SK-N-SH (cell line): ENCODE measurements at regions of chr17 and their contacts with region 1.

Region 1: DNA sequence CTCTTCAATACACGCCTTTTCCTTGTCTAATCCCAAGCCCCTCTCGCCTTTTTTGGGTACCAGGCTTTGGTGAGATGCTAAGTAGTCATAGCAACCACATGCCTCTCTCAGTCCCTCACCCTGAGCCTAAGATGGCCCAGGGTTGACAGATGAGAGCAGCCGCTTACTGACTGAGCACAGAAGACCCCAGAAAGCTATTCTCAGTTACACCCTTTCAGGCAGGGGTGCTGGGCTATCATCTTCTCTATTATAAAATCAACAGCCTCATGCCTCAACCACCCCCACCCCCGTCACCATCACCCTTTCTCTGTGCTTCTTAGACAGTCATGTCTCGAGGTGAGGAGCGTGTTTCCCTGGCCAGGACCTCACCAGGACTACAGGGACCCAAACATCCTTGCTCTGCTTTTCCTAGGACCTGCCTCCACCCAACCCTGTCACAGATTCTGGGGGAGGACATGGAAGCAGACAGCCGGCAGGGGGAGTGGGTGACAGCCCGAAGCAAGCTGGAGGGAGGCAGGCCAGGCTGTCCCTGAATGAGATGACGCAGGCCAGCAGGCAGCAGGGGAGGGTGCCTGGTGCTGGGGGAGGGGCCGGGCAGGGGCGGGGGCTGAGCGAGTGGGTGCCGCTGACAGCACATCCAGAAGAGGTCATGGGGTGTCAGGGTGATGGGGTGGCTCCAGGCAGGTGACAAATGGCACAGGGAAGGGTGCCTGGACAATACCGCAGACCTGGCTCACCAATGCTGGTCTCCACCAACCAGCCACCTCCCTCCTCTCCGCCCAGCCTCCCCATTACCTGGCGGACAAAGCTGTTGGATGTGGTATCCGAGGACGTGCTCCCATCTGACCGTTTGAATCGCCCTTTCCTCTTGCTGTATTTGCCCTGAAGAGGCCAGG is 3.1 kb downstream of the CACNB1 start:
- DNase-seq: peak; percentile 90
- H3K4me3 ChIP-seq: no peak overlapping the region
- H3K27ac ChIP-seq: no peak overlapping the region; a peak in 1 of 4 replicates
- H3K4me1 ChIP-seq: peaks cover 19 to 34% of the 10 kb centered on the region in 2 experiments; a peak in 2 of 4 replicates
- H3K27me3 ChIP-seq: no peaks in the 10 kb centered on the region
- CTCF ChIP-seq: peak; percentile 35; the same call in 1 of the 2 replicates
- EP300 ChIP-seq: no peak
- RAD21 ChIP-seq: peak; percentile 43

Region 2: DNA sequence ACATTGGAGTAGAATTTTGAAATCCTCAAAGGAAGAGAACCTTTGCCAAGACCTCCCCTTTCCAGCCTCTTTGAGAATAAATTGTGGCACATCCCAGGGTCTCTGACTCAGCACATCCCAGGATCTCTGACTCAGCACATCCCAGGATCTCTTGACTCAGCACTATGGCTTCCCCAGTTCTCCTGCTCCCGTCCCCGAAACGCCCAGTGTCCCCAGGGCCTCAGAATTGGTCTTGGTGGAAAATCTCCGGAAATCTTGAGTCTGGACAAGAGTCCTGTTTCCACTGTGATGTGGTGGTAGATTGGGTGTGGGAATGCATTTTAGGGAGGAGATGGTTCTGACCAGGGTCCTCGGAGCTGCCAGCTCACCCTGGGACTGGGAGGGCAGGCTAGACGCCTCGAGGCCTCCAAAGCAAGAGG is 62.1 kb before region 1 on chr17:
- CTCF ChIA-PET with region 1: no interaction called
- POLR2A ChIA-PET with region 1: no interaction called
- DNase-seq: no peak
- H3K4me3 ChIP-seq: no peak overlapping the region
- H3K27ac ChIP-seq: no peak overlapping the region
- H3K4me1 ChIP-seq: no peaks in the 10 kb centered on the region
- H3K27me3 ChIP-seq: no peaks in the 10 kb centered on the region
- CTCF ChIP-seq: no peak
- EP300 ChIP-seq: no peak
- RAD21 ChIP-seq: no peak

Region 3: GRCh38 chr17:39164675-39165143 is 29.6 kb before region 1 on chr17:
- CTCF ChIA-PET with region 1: interaction called, 96 read pairs
- POLR2A ChIA-PET with region 1: interaction called, 7 read pairs
- DNase-seq: peak; percentile 98
- H3K4me3 ChIP-seq: peak overlapping the region; percentile 50 to 62
- H3K27ac ChIP-seq: no peak overlapping the region
- H3K4me1 ChIP-seq: peaks cover 0 to 3% of the 10 kb centered on the region in 2 experiments; a peak in 2 of 4 replicates
- H3K27me3 ChIP-seq: no peaks in the 10 kb centered on the region
- CTCF ChIP-seq: peak; percentile 78
- EP300 ChIP-seq: no peak
- RAD21 ChIP-seq: peak; percentile 35; the same call in 1 of the 2 replicates

Region 4: DNA sequence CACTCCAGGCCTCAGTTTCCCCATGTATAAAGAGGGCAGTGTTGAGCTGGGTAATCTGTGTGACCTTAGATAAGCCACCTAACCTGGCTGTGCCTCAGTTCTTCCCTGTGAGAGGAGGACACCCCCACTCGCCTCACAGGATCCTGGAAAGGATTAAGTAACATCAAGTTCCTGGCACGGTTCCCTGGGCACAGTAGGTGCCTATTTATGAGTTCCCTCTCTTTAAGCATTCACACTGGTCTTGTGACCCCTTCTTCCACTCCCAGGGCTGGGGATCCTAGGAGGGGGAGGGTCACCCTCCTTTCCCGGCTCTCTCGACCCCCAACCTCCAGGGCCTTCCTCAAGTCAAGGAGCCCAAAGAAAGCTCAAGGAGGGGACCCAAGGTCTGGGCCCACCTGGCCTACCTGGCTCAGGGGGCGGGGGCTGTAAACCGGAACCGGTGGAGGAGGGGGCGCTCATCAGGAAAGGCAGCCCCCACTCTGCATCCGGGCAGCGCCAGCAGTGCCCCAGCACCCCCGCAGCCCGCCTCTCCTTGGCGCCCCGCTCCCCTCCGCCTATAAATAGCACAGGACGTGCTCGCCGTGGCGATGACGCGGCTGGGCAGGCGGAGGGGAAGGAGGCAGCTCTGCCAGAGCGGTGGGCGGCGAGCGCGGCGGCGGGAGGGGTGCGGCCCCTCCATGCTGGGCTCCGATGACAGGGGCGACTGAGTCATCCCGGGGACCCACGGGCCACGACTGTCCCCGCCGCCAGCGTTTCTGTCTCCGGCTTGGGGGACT is 15.2 kb after region 1 on chr17:
- CTCF ChIA-PET with region 1: interaction called, 10 read pairs
- POLR2A ChIA-PET with region 1: interaction called, 5 read pairs
- DNase-seq: peak; percentile 78
- H3K4me3 ChIP-seq: peak overlapping the region; percentile 38 to 56
- H3K27ac ChIP-seq: no peak overlapping the region
- H3K4me1 ChIP-seq: peaks cover 9% of the 10 kb centered on the region in 2 experiments; a peak in 2 of 4 replicates
- H3K27me3 ChIP-seq: no peaks in the 10 kb centered on the region
- CTCF ChIP-seq: no peak
- EP300 ChIP-seq: no peak
- RAD21 ChIP-seq: no peak